Sigmoid colon (tissue), 7 donors: ENCODE measurements at regions of chr19 and their contacts with region 1.

Region 1: DNA sequence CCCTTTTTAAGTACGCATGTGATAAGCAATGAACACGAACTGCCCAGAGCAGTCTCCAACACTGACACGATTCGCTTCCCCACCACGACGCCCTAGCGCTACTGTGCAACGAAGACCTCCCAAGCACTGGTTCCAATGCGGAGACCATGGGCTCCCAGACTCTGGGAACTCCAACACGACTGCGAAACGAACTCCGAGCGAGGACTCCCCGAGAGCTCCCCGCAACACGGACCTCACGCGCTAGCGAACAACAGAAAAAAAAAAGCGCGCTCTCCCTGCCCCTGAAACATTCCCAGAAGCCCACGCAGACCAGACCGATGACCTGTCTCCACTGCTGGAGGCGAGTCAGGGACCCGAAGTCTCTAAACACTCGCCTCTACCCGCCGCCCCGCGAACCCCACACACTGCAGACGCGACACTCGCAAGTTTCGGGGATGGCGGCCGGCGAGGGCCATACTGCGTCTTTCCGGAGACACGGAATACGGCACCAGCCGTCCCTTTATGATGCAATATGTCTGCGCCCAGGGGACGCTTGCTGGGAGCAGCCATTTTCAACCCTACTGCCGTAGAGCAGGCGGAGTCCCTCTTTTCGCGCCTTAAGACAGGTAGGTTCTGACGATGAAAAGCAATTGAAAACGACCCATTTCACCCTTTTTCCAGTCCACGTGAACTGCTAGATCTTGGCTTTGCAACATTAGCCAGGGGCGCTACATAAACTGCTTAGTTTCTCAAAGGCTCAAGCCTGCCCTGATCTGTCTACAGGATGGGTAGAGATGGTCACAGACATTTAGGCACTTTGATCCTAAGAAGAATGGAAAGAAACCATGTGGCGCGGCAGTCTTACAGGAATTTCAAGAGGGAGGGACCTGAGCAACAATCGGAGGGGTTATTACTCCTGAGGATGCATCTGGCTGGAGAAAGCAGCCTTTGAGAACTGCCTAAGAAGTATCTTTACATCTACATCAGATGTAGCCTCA is at the start of gene ZNF577:
- DNase-seq: peak; percentile 94
- H3K4me3 ChIP-seq: peak within 1 kb of the TSS; percentile 58 to 72 (median 62)
- H3K27ac ChIP-seq: peak within 1 kb of the TSS; percentile 80 to 83 (median 80)
- H3K4me1 ChIP-seq: peaks cover 0 to 14% (median 10%) of the 10 kb centered on the region in 4 donors
- H3K27me3 ChIP-seq: no peaks in the 10 kb centered on the region
- CTCF ChIP-seq: no peak
- EP300 ChIP-seq: peak in 1 of 4 donors; percentile 48
- POLR2A ChIP-seq: no peak
- total RNA-seq, gene ZNF577: 21.7 to 28.0 (median 23.4) TPM

Region 2: GRCh38 chr19:51904331-51905165 is 16.7 kb after region 1 on chr19 and contains the start of gene ZNF649:
- intact Hi-C with region 1: loop called (anchors 2 kb)
- DNase-seq: peak; percentile 84
- H3K4me3 ChIP-seq: peak within 1 kb of the TSS; percentile 62 to 82 (median 74)
- H3K27ac ChIP-seq: peak within 1 kb of the TSS; percentile 82 to 89 (median 87)
- H3K4me1 ChIP-seq: peaks cover 0 to 15% (median 12%) of the 10 kb centered on the region in 4 donors
- H3K27me3 ChIP-seq: peaks cover 0 to 21% (median 0%) of the 10 kb centered on the region in 3 donors
- CTCF ChIP-seq: no peak
- EP300 ChIP-seq: no peak
- POLR2A ChIP-seq: peak in 1 of 2 donors; percentile 24
- total RNA-seq, gene ZNF649: 10.5 to 14.6 (median 12.1) TPM

Region 3: DNA sequence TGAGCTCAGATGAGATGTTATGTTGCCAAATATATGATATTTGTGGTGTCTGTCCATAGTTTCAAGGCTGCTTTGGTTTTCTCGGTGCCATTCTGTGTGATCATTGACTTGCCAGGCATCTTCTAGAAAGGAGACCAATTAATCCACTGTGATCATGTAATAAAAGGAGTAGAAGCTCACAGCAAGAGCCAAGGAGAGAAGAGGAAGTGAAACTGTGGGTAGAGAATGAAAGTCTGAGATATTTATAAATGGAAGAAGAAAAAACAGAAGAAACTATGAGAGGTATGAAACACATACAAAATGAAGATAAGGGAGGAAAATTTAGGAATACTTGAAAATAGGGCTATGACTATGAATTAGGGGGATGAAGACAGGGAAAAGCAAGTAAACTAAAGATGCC is 28.4 kb after region 1 on chr19:
- intact Hi-C with region 1: no loop called
- DNase-seq: no peak
- H3K4me3 ChIP-seq: no peak overlapping the region
- H3K27ac ChIP-seq: no peak overlapping the region
- H3K4me1 ChIP-seq: no peaks in the 10 kb centered on the region
- H3K27me3 ChIP-seq: no peaks in the 10 kb centered on the region
- CTCF ChIP-seq: no peak
- EP300 ChIP-seq: no peak
- POLR2A ChIP-seq: no peak

Region 4: GRCh38 chr19:51926784-51927742 is 39.3 kb after region 1 on chr19 and contains the start of gene ZNF613:
- intact Hi-C with region 1: loop called (anchors 1 kb)
- DNase-seq: peak; percentile 92
- H3K4me3 ChIP-seq: peak within 1 kb of the TSS; percentile 68 to 91 (median 84)
- H3K27ac ChIP-seq: peak within 1 kb of the TSS; percentile 81 to 88 (median 86)
- H3K4me1 ChIP-seq: peaks cover 0 to 14% (median 11%) of the 10 kb centered on the region in 4 donors
- H3K27me3 ChIP-seq: no peaks in the 10 kb centered on the region
- CTCF ChIP-seq: peak in 1 of 4 experiments; percentile 12
- EP300 ChIP-seq: no peak
- POLR2A ChIP-seq: no peak
- total RNA-seq, gene ZNF613: 2.4 to 8.1 (median 5.9) TPM

Region 5: DNA sequence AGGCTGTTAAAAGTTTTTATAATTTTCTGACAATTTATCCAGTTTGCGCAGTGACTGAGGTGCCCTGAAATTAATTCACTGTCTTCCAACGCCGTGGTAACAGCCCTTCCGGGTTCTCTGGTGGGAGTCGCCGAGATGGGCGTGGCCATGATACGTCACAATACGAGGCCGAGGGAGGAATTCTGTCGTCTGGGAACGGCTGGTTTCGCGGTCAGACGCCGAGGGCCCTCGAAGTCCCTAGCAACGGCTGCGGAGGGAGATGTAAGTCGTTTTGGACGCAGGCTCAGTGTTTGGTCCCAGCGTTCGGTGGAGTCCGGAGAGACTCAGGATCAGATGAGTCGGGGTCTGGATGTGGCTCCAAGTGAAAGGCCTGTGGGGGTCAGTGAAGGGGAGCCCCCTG is 61.2 kb after region 1 on chr19:
- intact Hi-C with region 1: no loop called
- DNase-seq: no peak
- H3K4me3 ChIP-seq: peak overlapping the region in 2 of 4 donors; percentile 4 to 36
- H3K27ac ChIP-seq: peak overlapping the region in 1 of 4 donors; percentile 41
- H3K4me1 ChIP-seq: no peaks in the 10 kb centered on the region
- H3K27me3 ChIP-seq: no peaks in the 10 kb centered on the region
- CTCF ChIP-seq: no peak
- EP300 ChIP-seq: no peak
- POLR2A ChIP-seq: no peak